ENCODE measurements at regions of chr15 and their contacts with region 1.

Region 1: DNA sequence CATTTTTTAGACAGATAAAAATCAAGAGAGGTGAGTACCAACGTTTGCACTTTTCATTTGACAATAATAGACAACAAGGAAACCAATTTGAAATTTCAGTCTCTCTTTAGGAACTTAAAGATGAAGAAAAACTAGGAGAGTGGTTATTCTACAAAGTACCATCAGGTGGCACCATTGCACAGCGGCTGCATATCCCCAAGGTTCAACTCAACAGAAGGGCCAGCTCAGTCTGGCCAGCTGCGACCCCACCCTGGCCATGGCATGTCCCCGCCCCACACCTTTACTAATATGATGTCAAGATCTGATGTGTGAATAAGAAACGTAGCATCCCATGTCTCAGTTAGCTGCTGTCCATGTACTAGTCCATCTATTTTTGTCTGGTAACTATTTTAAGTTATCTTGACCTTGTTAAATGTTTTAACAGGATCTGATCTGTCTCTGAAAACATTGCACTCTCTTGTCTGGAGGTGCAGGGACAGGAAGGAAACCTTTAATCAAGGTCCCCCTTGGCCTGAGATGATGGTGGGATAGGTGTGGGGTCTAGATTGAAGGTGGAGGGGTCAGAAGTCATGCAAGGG is 35.5 kb upstream of the CGNL1 start:
- DNase-seq: no peak
- H3K4me3 ChIP-seq: no peak overlapping the region
- H3K27ac ChIP-seq: no peak overlapping the region
- H3K27me3 ChIP-seq: no peaks in the 10 kb centered on the region
- CTCF ChIP-seq: peak; percentile 84

Region 2: GRCh38 chr15:57146506-57147201 is 194.1 kb before region 1 on chr15:
- CTCF ChIA-PET with region 1: interaction called, 26 read pairs
- POLR2A ChIA-PET with region 1: no interaction called
- DNase-seq: no peak
- H3K4me3 ChIP-seq: peak overlapping the region; percentile 26
- H3K27ac ChIP-seq: no peak overlapping the region
- H3K27me3 ChIP-seq: no peaks in the 10 kb centered on the region
- CTCF ChIP-seq: peak; percentile 70

Region 3: GRCh38 chr15:57327985-57328471 is 12.7 kb before region 1 on chr15:
- CTCF ChIA-PET with region 1: interaction called, 12 read pairs
- POLR2A ChIA-PET with region 1: no interaction called
- DNase-seq: peak; percentile 90
- H3K4me3 ChIP-seq: no peak overlapping the region
- H3K27ac ChIP-seq: peak overlapping the region; percentile 74
- H3K27me3 ChIP-seq: no peaks in the 10 kb centered on the region
- CTCF ChIP-seq: no peak

Region 4: DNA sequence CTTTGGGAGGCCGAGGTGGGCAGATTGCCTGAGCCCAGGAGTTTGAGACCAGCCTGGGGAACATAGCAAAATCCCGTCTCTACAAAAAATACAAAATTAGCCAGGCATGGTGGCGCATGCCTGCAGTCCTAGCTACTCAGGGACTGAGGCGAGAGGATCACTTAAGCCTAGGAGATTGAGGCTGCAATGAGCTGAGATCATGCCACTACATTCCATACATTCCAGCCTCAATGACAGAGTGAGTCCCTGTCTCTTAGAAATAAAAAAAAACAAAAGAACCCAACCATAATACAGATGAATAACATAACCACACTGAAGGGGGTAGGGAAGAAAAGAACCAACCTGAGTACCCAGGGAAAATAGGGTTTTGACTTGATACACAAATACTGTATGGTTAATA is 15.9 kb after region 1 on chr15:
- CTCF ChIA-PET with region 1: interaction called, 19 read pairs
- POLR2A ChIA-PET with region 1: no interaction called
- DNase-seq: no peak
- H3K4me3 ChIP-seq: no peak overlapping the region
- H3K27ac ChIP-seq: no peak overlapping the region
- H3K27me3 ChIP-seq: peaks cover 3% of the 10 kb centered on the region
- CTCF ChIP-seq: no peak

Region 5: DNA sequence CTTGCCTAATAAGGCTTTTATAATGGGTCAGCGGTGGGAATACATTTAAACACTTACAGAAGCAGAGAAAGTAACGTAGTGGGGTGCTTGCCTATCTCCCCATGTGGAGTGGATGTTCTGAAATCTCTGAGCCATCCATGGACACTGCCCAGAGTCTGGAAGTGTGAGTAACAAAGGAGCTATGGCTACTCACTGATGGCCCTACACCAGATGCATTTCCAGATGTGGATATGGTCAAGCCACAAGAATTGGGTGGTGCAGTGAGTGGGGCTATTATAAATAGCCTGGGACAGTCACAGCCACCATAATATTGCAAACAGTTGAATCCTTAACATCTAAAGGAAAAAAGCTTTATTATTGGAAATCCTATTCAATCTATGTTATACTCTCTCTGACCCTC is 132.1 kb after region 1 on chr15:
- CTCF ChIA-PET with region 1: no interaction called
- POLR2A ChIA-PET with region 1: no interaction called
- DNase-seq: no peak
- H3K4me3 ChIP-seq: no peak overlapping the region
- H3K27ac ChIP-seq: no peak overlapping the region
- H3K27me3 ChIP-seq: peaks cover 9% of the 10 kb centered on the region
- CTCF ChIP-seq: no peak

Region 6: GRCh38 chr15:57521503-57521902 is 180.7 kb after region 1 on chr15:
- CTCF ChIA-PET with region 1: interaction called, 503 read pairs
- POLR2A ChIA-PET with region 1: no interaction called
- DNase-seq: no peak
- H3K4me3 ChIP-seq: no peak overlapping the region
- H3K27ac ChIP-seq: no peak overlapping the region
- H3K27me3 ChIP-seq: peaks cover 11% of the 10 kb centered on the region
- CTCF ChIP-seq: no peak

Region 7: DNA sequence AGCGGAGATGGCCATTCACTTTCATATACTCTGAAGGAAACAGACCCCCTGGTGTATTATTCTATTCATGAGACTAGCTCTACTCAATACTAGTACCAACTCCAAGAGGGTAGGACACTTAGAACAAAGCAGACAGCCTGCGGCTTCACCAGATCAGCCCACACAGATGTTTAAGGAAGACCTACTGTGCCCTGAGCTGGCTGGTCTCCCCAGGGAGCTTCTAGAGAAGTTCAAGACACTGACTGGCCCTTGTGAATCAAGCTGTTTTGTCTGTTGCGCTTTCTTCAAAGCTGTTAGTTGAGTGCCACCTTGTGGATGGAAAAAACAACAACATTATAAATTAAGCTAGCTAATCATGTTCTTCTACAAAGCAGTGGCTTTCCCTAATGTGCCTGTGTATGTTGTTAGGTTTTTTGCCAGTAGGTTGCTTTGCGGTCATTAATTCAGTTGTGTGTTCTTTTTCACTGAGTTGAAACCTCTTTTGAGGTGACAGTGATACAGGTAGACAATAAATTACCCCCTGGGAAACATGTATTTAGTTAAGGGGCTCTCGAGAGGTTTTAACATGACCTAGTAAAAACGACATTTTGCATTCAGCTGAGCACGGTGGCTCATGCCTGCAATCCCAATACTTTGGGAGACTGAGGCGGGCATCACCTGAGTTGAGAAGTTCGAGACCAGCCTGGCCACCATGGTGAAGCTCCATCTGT is 186.8 kb after region 1 on chr15:
- CTCF ChIA-PET with region 1: interaction called, 503 read pairs
- POLR2A ChIA-PET with region 1: no interaction called
- DNase-seq: peak; percentile 78
- H3K4me3 ChIP-seq: no peak overlapping the region
- H3K27ac ChIP-seq: no peak overlapping the region
- H3K27me3 ChIP-seq: peaks cover 9% of the 10 kb centered on the region
- CTCF ChIP-seq: peak; percentile 65

Region 8: GRCh38 chr15:57534281-57534680 is 193.5 kb after region 1 on chr15:
- CTCF ChIA-PET with region 1: interaction called, 503 read pairs
- POLR2A ChIA-PET with region 1: no interaction called
- DNase-seq: no peak
- H3K4me3 ChIP-seq: no peak overlapping the region
- H3K27ac ChIP-seq: no peak overlapping the region
- H3K27me3 ChIP-seq: peaks cover 6% of the 10 kb centered on the region
- CTCF ChIP-seq: no peak